ENCODE measurements at regions of chr5 and their contacts with region 1.

Region 1: DNA sequence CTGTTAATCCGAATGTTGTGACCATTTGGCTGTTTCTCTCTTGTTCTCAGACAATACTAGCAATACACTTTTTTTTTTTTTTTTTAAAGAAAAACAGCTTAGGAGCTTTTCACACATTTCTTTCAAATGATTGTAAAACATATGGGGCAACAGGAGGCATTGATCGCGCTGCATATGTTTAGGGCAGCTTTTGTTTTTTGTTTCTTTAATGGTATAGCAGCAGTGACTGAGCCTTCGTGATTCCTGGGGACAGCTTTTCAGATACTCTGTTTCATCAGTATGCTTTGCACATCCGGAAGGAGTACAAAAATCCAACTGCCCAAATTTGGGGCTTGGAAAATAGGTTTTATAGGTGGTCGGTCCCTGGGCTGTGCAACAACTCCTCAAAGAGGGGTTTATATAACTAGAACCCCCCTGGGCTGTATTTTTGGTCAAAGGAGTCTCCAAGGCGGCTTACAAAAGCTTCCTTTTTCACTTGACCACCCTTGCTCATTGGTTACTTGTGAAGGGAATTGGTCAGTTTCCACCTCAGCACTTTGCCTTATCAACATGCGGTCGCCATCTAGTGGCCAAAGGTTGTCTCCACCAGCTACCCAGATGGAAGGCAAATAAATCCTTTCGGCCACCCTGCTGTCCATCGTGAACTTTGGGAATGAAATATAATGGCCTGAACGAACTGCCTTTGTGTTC is 91.8 kb downstream of the PDE6A start:
- DNase-seq: peak; percentile 79
- H3K27ac ChIP-seq: no peak overlapping the region
- CTCF ChIP-seq: peak; percentile 95

Region 2: DNA sequence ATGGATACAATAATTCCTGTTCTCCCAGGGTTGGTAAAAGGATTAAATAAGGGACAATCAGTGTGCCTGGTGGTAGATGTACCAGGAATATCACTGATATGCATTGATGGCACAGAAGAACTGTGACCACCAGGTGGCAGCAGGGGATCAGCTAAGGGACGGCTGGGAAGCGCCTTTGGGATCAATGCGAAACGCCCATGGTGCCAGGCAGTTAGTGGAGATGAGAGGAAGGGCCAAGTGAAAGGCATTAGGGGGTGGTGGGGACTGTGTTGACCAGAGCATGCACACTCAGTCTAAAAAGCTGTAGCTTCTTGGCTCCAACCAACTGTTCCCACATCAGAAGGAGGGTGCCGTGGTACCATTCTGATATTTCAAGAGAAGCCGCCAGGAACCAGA is 215.9 kb before region 1 on chr5:
- CTCF ChIA-PET with region 1: interaction called, 11 read pairs
- POLR2A ChIA-PET with region 1: no interaction called
- DNase-seq: peak; percentile 75
- H3K27ac ChIP-seq: peak overlapping the region; percentile 67; the same call in 1 of the 2 replicates
- CTCF ChIP-seq: peak; percentile 94

Region 3: GRCh38 chr5:149702934-149703646 is 149.7 kb before region 1 on chr5:
- CTCF ChIA-PET with region 1: no interaction called
- POLR2A ChIA-PET with region 1: no interaction called
- DNase-seq: no peak
- H3K27ac ChIP-seq: no peak overlapping the region
- CTCF ChIP-seq: no peak

Region 4: GRCh38 chr5:149834246-149834855 is 18.4 kb before region 1 on chr5:
- CTCF ChIA-PET with region 1: interaction called, 29 read pairs
- POLR2A ChIA-PET with region 1: no interaction called
- DNase-seq: peak; percentile 64
- H3K27ac ChIP-seq: peak overlapping the region; percentile 5; the same call in 1 of the 2 replicates
- CTCF ChIP-seq: peak; percentile 82

Region 5: DNA sequence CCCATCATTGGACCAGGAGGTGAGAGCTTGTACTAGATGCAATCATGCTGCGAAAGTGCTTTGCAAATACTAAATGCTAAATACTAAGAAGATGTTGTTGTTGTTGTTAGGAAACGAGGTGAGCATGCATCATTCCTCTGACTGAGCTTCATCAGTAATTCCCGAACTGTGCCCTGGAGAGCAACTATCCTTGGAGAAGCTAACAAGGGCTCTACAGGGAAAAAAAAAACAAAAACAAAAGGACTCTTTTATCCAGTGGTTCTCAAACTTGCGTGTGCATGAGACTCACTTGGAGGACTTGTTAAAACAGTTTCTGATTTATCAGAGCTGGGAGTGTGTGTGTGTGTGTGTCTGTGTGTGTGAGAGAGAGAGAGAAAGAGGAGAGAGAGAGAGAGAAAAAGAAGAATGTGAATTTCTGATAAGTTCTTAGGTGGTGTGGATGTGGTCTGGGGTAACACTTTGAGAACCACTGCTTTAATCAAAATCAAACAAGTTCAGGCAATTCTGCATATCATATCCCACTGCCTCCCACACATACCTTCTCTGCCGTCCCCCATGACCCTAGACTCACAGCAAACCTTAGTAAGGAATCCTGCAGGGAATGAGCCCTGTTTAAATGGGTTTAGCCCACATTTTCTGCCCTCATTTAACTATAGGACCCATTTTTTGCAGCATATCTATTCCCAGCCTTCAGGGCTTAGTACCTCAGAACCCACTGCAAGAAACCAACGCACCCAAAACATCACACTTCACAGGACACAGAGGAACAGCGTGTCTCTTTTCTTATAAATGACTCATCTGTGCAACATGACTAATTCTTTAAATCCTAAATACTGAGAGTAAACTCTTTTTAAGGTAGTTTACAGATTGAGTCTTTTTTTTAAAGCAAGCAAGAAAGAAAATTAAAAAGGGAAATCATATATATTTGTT is 42.9 kb after region 1 on chr5:
- CTCF ChIA-PET with region 1: interaction called, 10 read pairs
- POLR2A ChIA-PET with region 1: no interaction called
- DNase-seq: peak; percentile 56
- H3K27ac ChIP-seq: peak overlapping the region; percentile 79; the same call in 1 of the 2 replicates
- CTCF ChIP-seq: no peak

Region 6: GRCh38 chr5:149990518-149991376 is 138.0 kb after region 1 on chr5:
- CTCF ChIA-PET with region 1: interaction called, 26 read pairs
- POLR2A ChIA-PET with region 1: no interaction called
- DNase-seq: peak; percentile 88
- H3K27ac ChIP-seq: no peak overlapping the region
- CTCF ChIP-seq: peak; percentile 97